ENCODE measurements at regions of chr5 and their contacts with region 1.

Region 1: GRCh38 chr5:150497274-150497988 is 10.5 kb upstream of the NDST1 start:
- DNase-seq: no peak
- CTCF ChIP-seq: no peak

Region 2: GRCh38 chr5:150486402-150487198 is 10.8 kb before region 1 on chr5:
- CTCF ChIA-PET with region 1: interaction called, 11 read pairs
- POLR2A ChIA-PET with region 1: interaction called, 5 read pairs
- DNase-seq: peak; percentile 60
- CTCF ChIP-seq: no peak